ENCODE measurements at regions of chr4 and their contacts with region 1.

Region 1: GRCh38 chr4:185134307-185134869 is 8.7 kb upstream of the SLC25A4 start:
- DNase-seq: peak; percentile 63
- H3K4me3 ChIP-seq: no peak overlapping the region
- H3K27ac ChIP-seq: no peak overlapping the region
- H3K4me1 ChIP-seq: no peaks in the 10 kb centered on the region
- H3K27me3 ChIP-seq: no peaks in the 10 kb centered on the region
- CTCF ChIP-seq: peak; percentile 84

Region 2: GRCh38 chr4:184472614-184473498 is 661.5 kb before region 1 on chr4:
- CTCF ChIA-PET with region 1: no interaction called
- POLR2A ChIA-PET with region 1: no interaction called
- intact Hi-C with region 1: no loop called
- DNase-seq: peak; percentile 51
- H3K4me3 ChIP-seq: peak overlapping the region; percentile 91
- H3K27ac ChIP-seq: peak overlapping the region; percentile 91
- H3K4me1 ChIP-seq: peaks cover 8% of the 10 kb centered on the region
- H3K27me3 ChIP-seq: no peaks in the 10 kb centered on the region
- CTCF ChIP-seq: no peak

Region 3: DNA sequence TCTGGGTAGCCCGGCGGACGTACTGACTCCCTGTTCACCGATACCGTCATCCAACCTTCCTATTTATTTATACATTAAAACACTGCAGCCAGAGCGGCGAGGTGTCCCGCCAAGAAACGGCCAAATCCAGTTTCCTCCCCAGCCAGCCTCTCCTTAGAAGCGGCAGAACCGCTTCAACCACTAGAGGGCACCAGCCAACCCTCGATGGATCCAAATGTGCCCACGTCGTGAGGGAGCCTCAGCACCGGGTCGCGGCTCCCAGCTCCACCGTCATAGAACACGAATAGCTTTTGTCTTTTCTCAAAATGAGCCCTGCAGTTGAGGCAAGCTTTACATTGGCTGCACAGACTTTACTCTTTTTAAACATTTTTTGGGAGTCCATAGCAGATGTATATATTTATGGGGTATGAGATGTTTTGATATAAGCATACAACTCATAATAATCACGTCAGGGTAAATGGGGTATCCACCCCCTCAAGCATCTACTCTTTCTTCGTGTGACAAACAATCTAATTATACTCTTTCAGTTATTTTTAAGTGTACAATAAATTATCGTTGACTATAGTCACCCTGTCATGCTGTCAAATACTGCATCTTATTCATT is 129.1 kb before region 1 on chr4:
- CTCF ChIA-PET with region 1: interaction called, 8 read pairs
- POLR2A ChIA-PET with region 1: no interaction called
- intact Hi-C with region 1: loop called (anchors 5 kb)
- DNase-seq: peak; percentile 86
- H3K4me3 ChIP-seq: peak overlapping the region; percentile 23
- H3K27ac ChIP-seq: no peak overlapping the region
- H3K4me1 ChIP-seq: peaks cover 5% of the 10 kb centered on the region
- H3K27me3 ChIP-seq: peaks cover 23% of the 10 kb centered on the region
- CTCF ChIP-seq: peak; percentile 96

Region 4: DNA sequence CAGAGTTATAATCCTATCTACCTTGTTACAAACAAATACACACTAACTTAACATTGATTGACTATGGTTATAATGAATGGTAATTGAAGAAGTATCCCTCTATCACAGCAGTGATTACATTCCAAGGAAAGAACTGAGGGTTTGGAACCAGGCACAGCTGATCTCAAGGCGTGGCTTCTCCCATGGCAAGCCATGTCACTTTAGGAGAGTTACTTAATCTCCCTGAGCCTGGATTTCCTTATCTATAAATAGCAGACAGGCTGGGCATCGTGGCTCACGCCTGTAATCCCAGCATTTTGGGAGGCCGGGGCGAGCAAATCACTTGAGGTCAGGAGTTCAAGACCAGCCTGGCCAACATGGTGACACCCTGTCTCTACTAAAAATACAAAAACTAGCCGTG is 652.0 kb after region 1 on chr4:
- CTCF ChIA-PET with region 1: interaction called, 12 read pairs
- POLR2A ChIA-PET with region 1: no interaction called
- intact Hi-C with region 1: no loop called
- DNase-seq: no peak
- H3K4me3 ChIP-seq: no peak overlapping the region
- H3K27ac ChIP-seq: no peak overlapping the region
- H3K4me1 ChIP-seq: no peaks in the 10 kb centered on the region
- H3K27me3 ChIP-seq: no peaks in the 10 kb centered on the region
- CTCF ChIP-seq: no peak